CD4-positive, alpha-beta T cell (primary cell): ENCODE measurements at regions of chr11 and their contacts with region 1.

Region 1: DNA sequence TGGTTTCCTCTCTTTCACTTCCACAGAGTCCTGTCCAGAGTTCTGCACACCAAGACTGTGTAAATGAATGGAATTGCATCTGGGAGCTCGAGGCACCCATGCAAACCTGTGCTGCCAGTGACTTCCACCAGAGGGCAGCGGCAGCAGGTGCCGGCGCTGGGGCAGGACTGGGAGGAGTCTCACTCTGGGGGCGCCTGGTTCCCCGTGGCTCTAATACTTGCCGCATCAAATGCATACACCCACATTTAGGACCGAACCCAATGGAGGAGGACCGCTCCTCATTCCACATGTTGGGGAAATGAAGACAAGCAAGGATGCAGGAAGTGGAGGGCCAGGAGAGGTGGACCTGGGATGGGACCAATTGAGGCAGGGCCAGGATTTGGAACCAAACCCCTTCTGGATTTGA is 1.1 kb upstream of the CD6 start:
- DNase-seq: peak; percentile 71 to 90 (median 80)
- ATAC-seq: peak; percentile 71
- H3K4me3 ChIP-seq: peak overlapping the region; percentile 96
- H3K4me3 Mint-ChIP-seq: peak overlapping the region; percentile 90
- H3K27ac ChIP-seq: peak overlapping the region; percentile 83 to 93
- H3K27ac Mint-ChIP-seq: peak overlapping the region; percentile 94
- H3K4me1 ChIP-seq: peaks cover 29% of the 10 kb centered on the region
- H3K4me1 Mint-ChIP-seq: peaks cover 25% of the 10 kb centered on the region
- H3K27me3 ChIP-seq: no peaks in the 10 kb centered on the region
- H3K27me3 Mint-ChIP-seq: no peaks in the 10 kb centered on the region
- CTCF ChIP-seq: peak; percentile 97

Region 2: DNA sequence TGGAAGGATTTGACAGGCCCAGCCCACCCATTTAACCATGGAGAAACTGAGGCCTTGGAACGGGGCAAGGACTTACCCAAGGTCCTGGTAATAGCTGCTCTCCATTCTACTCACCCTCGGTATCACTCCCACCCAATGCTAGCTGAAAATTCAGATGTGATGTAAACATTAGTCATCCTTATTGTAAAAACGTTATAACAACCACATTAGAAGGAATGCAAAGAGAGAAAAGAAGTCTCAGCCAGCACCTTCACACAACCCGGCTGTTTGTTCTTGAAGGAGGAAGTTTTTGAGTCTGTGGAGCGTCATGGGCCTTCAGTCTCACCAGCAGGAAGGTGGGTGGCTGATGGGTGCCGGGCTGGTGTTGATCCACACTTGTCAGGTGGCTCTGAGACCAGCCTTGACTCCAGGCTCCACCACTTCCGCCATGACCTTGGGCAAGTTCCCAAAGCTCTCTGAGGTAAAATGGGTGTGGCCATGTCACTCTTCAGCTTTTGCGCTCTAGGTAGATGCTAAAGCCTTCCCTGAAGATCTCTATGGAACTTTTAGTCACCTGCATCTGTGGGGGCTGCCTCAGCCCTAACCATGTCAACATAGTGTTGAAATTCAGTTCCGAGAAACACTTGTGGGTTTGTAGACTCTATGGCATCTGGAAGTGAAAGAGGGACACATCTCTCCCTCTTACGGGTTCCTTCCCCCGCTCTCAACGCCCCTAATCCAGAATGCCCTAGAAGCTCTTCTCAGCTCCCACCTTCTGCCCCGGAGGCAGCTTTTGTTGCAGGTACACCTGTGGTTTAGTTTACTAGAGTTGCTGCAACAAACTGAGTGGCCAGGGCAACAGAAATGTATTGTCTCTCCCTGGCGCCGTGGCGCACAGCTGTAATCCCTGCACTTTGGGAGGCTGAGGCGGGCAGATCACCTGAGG is 15.9 kb after region 1 on chr11:
- CTCF ChIA-PET with region 1: interaction called, 7 read pairs
- POLR2A ChIA-PET with region 1: interaction called, 4 read pairs
- intact Hi-C with region 1: loop called (anchors 1 to 2 kb)
- DNase-seq: peak; percentile 81 to 99 (median 90)
- ATAC-seq: peak; percentile 81
- H3K4me3 ChIP-seq: peak overlapping the region; percentile 41
- H3K4me3 Mint-ChIP-seq: peak overlapping the region; percentile 72
- H3K27ac ChIP-seq: peak overlapping the region; percentile 86 to 95
- H3K27ac Mint-ChIP-seq: peak overlapping the region; percentile 94
- H3K4me1 ChIP-seq: peaks cover 91% of the 10 kb centered on the region
- H3K4me1 Mint-ChIP-seq: peaks cover 98% of the 10 kb centered on the region
- H3K27me3 ChIP-seq: no peaks in the 10 kb centered on the region
- H3K27me3 Mint-ChIP-seq: no peaks in the 10 kb centered on the region
- CTCF ChIP-seq: no peak

Region 3: DNA sequence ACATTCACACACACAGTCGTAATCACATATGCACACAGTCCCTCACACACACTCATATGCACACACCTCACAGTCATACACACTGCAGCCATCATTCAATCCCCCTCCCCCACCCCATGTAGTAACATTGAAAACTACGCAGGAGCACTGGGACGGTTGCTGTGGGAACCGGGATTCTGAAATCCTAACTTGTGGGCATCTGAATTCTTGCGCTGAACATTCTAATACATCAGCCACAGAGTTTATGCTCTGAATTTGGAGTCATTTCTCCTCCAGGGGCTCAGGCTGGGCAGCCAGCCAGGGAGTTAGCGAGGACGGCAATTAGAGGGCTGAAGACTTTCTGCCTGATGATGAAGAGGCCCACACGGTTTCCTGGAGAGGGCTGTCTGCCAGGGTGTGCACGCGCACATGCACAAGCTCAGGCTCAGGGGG is 33.8 kb after region 1 on chr11:
- CTCF ChIA-PET with region 1: interaction called, 7 read pairs
- POLR2A ChIA-PET with region 1: interaction called, 6 read pairs
- intact Hi-C with region 1: loop called (anchors 2 kb)
- DNase-seq: peak in 11 of 14 experiments; percentile 40 to 73 (median 55)
- ATAC-seq: peak; percentile 59
- H3K4me3 ChIP-seq: peak overlapping the region; percentile 30
- H3K4me3 Mint-ChIP-seq: peak overlapping the region; percentile 86
- H3K27ac ChIP-seq: peak overlapping the region; percentile 63 to 71
- H3K27ac Mint-ChIP-seq: peak overlapping the region; percentile 95
- H3K4me1 ChIP-seq: peaks cover 89% of the 10 kb centered on the region
- H3K4me1 Mint-ChIP-seq: peaks cover 92% of the 10 kb centered on the region
- H3K27me3 ChIP-seq: no peaks in the 10 kb centered on the region
- H3K27me3 Mint-ChIP-seq: no peaks in the 10 kb centered on the region
- CTCF ChIP-seq: no peak

Region 4: DNA sequence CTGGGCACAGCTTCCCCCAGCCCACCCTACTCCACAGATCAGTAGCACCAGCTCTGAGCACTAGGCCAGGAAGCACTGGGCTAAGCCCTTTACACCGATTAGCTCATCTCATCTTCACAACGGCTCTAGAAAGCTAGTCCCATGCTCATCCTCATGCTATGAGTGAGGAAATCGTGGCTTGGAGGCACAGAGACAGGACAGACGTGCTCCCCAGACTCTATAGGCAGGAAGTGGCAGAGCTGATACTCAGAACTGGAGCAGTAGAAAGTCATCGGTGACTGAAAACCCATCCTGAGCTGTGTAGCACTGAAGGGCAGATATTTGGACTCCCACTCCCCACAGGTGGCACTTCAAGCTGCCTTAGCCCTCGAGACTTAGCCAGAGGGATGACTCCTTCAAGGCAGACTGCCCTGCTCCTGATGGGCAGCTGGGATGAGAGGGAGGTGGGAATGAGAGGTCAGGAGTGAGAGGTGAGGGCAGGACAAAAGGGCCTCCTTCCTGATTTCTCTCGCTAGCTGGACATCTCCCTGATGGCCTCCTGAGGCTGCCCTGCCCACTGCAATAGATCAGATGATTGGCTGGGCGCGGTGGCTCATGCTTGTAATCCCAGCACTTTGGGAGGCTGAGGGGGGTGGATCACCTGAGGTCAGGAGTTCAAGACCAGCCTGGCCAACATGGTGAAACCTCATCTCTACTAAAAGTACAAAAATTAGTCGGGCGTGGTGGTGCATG is 141.6 kb after region 1 on chr11:
- CTCF ChIA-PET with region 1: interaction called, 14 read pairs
- POLR2A ChIA-PET with region 1: interaction called, 3 read pairs
- intact Hi-C with region 1: loop called in 1 of 2 experiments (anchors 2 kb)
- DNase-seq: peak in 13 of 14 experiments; percentile 28 to 87 (median 52)
- ATAC-seq: peak; percentile 78
- H3K4me3 ChIP-seq: peak overlapping the region; percentile 24
- H3K4me3 Mint-ChIP-seq: peak overlapping the region; percentile 83
- H3K27ac ChIP-seq: peak overlapping the region; percentile 67 to 71
- H3K27ac Mint-ChIP-seq: no peak overlapping the region
- H3K4me1 ChIP-seq: peaks cover 100% of the 10 kb centered on the region
- H3K4me1 Mint-ChIP-seq: peaks cover 100% of the 10 kb centered on the region
- H3K27me3 ChIP-seq: no peaks in the 10 kb centered on the region
- H3K27me3 Mint-ChIP-seq: no peaks in the 10 kb centered on the region
- CTCF ChIP-seq: no peak

Region 5: GRCh38 chr11:61187505-61188130 is 217.2 kb after region 1 on chr11:
- CTCF ChIA-PET with region 1: interaction called, 6 read pairs
- POLR2A ChIA-PET with region 1: no interaction called
- intact Hi-C with region 1: loop called (anchors 1 kb)
- DNase-seq: peak; percentile 64 to 89 (median 75)
- ATAC-seq: peak; percentile 89
- H3K4me3 ChIP-seq: no peak overlapping the region
- H3K4me3 Mint-ChIP-seq: no peak overlapping the region
- H3K27ac ChIP-seq: no peak overlapping the region
- H3K27ac Mint-ChIP-seq: no peak overlapping the region
- H3K4me1 ChIP-seq: no peaks in the 10 kb centered on the region
- H3K4me1 Mint-ChIP-seq: no peaks in the 10 kb centered on the region
- H3K27me3 ChIP-seq: no peaks in the 10 kb centered on the region
- H3K27me3 Mint-ChIP-seq: peaks cover 3% of the 10 kb centered on the region
- CTCF ChIP-seq: peak; percentile 99